Natural killer cell (primary cell): ENCODE measurements at regions of chr9 and their contacts with region 1.

Region 1: GRCh38 chr9:86075132-86076109 is 23.9 kb downstream of the GOLM1 start:
- DNase-seq: peak in 1 of 2 donors; percentile 29
- ATAC-seq: peak; percentile 57 to 76 (median 69)
- H3K4me3 ChIP-seq: no peak overlapping the region
- H3K4me3 Mint-ChIP-seq: peak overlapping the region; percentile 81
- H3K27ac ChIP-seq: peak overlapping the region; percentile 70
- H3K27ac Mint-ChIP-seq: peak overlapping the region; percentile 85 to 93
- H3K4me1 ChIP-seq: peaks cover 20% of the 10 kb centered on the region
- H3K4me1 Mint-ChIP-seq: peaks cover 17 to 33% of the 10 kb centered on the region in 2 donors
- H3K27me3 ChIP-seq: no peaks in the 10 kb centered on the region
- H3K27me3 Mint-ChIP-seq: no peaks in the 10 kb centered on the region
- CTCF ChIP-seq: no peak

Region 2: DNA sequence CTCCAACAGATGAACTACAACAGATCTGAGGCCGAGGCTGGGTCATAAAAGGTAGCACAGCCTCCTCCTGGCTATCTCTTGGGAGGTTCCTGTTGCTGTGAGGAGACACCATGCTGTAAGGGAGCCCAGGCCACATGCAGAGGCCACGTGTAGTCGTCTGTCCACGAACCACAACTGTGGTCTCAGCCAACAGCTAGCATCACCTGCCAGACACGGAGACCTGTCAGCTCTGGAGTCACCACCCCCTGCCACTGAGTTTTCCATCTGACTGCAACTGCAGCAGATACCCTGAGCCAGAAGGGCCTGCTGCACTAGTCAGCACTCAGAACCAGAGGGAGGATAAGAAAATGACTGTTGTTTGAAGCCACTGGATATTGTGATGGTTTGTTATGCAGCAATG is 36.6 kb after region 1 on chr9:
- intact Hi-C with region 1: loop called (anchors 2 kb)
- DNase-seq: no peak
- ATAC-seq: no peak
- H3K4me3 ChIP-seq: no peak overlapping the region
- H3K4me3 Mint-ChIP-seq: no peak overlapping the region
- H3K27ac ChIP-seq: no peak overlapping the region
- H3K27ac Mint-ChIP-seq: no peak overlapping the region
- H3K4me1 ChIP-seq: no peaks in the 10 kb centered on the region
- H3K4me1 Mint-ChIP-seq: peaks cover 2% of the 10 kb centered on the region in 2 donors
- H3K27me3 ChIP-seq: no peaks in the 10 kb centered on the region
- H3K27me3 Mint-ChIP-seq: peaks cover 0 to 9% of the 10 kb centered on the region in 2 donors
- CTCF ChIP-seq: no peak